Activated B cell treated with CpG ODN at 0.5 μM for 24 hours (primary cell): ENCODE measurements at regions of chr11 and their contacts with region 1.

Region 1: DNA sequence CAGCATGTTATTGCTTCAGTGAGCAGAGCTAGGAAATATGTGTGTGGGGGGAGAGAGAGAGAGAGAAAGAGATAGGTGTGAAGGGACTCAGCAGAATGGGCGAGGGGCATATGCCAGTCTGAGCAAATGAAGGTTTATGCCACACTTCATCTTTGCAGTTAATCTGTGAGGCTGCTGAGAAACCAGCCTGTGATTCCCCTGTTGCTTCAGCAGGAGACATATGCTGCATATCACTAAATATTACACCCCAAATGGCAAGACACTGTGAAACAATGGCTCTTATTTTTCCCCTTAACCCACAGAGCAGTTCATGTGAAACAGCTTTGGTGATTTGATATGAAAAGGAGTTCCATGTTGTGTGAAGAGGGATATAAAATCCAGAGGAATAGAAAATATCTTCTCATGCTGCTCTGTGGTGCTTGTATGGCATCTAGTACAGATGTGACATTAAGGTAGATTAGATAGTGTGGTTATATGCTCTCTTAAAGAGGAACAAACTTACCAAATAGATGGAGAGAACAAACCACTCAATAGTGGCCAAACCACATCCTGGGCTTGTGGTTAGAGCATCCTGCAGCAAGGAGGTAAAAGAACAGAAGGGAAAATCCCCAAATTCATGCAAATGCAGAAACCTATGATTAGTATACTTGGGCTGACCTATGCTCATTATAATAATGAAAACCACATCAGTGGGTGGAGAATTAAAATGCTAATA is 864.2 kb downstream of the FAM181B start:
- DNase-seq: peak; percentile 38
- ATAC-seq: peak; percentile 86
- H3K4me3 Mint-ChIP-seq: peak overlapping the region; percentile 73
- H3K27ac Mint-ChIP-seq: peak overlapping the region; percentile 83
- H3K4me1 Mint-ChIP-seq: peaks cover 39% of the 10 kb centered on the region
- H3K27me3 Mint-ChIP-seq: peaks cover 1% of the 10 kb centered on the region
- CTCF ChIP-seq: no peak

Region 2: DNA sequence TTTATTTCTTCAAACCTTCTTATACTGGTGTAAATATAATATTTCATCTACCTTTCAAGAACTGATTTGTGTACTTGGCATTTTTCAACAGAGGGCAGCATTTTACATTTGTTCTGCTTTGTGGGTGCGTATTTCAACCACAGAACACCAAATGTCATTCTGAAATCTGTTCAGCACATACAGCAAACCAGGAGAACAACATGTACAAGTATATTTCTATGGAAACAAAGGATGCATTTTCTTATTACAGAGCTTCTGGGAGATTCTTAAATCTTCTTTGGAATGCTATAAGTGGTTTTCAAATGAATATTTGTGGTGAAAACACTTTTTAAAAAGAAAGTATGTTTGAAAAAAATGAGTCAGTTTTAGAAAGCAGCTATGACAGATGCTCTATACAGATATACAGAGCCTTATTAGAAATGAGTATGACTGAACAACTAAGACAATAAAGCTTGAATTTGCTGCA is 81.9 kb before region 1 on chr11:
- CTCF ChIA-PET with region 1: no interaction called
- POLR2A ChIA-PET with region 1: no interaction called
- intact Hi-C with region 1: loop called (anchors 1 kb)
- DNase-seq: no peak
- ATAC-seq: no peak
- H3K4me3 Mint-ChIP-seq: no peak overlapping the region
- H3K27ac Mint-ChIP-seq: no peak overlapping the region
- H3K4me1 Mint-ChIP-seq: no peaks in the 10 kb centered on the region
- H3K27me3 Mint-ChIP-seq: no peaks in the 10 kb centered on the region
- CTCF ChIP-seq: peak; percentile 19

Region 3: DNA sequence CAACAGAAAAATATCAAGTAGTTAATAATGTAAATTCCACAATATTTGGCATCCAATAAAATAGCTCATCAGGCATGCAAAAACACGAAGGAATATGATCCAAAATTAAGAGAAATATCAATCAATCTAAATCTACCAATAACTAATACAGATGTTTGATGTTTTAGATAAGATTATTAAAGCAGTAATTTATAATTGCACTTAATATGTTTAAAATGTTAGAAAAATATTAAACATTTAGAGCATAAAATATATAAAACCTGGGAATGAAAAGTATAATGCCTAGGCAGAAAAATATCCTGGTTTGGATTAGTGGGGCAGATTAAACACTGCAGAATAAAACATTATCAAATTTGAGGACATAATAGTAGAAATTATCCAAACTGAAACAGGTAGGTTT is 15.7 kb before region 1 on chr11:
- CTCF ChIA-PET with region 1: interaction called, 4 read pairs
- POLR2A ChIA-PET with region 1: no interaction called
- intact Hi-C with region 1: loop called (anchors 2 kb)
- DNase-seq: no peak
- ATAC-seq: no peak
- H3K4me3 Mint-ChIP-seq: no peak overlapping the region
- H3K27ac Mint-ChIP-seq: no peak overlapping the region
- H3K4me1 Mint-ChIP-seq: no peaks in the 10 kb centered on the region
- H3K27me3 Mint-ChIP-seq: peaks cover 3% of the 10 kb centered on the region
- CTCF ChIP-seq: no peak

Region 4: GRCh38 chr11:81963018-81963417 is 93.5 kb after region 1 on chr11:
- CTCF ChIA-PET with region 1: no interaction called
- POLR2A ChIA-PET with region 1: no interaction called
- intact Hi-C with region 1: no loop called
- DNase-seq: no peak
- ATAC-seq: no peak
- H3K4me3 Mint-ChIP-seq: no peak overlapping the region
- H3K27ac Mint-ChIP-seq: no peak overlapping the region
- H3K4me1 Mint-ChIP-seq: peaks cover 2% of the 10 kb centered on the region
- H3K27me3 Mint-ChIP-seq: no peaks in the 10 kb centered on the region
- CTCF ChIP-seq: no peak

Region 5: DNA sequence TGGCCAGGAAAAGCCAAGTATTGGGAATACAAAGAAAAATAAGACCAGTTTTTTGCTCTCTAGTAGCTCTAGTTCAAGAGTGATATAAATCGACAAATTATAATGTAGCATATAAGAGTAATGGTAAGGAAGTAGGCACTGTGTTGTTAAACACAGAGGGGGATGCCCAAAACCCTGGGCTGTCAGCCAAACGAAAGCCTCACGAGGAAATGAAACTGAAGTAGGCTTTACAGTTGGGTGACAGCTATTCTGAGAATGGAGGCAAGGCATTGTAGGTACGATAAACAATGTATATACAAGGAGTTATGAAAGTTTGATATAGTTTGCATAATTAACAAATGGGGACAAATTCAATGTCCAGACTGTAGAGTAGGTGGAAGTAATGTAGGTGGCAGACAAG is 687.8 kb after region 1 on chr11:
- CTCF ChIA-PET with region 1: no interaction called
- POLR2A ChIA-PET with region 1: no interaction called
- intact Hi-C with region 1: loop called (anchors 2 kb)
- DNase-seq: no peak
- ATAC-seq: peak; percentile 95
- H3K4me3 Mint-ChIP-seq: peak overlapping the region; percentile 5
- H3K27ac Mint-ChIP-seq: no peak overlapping the region
- H3K4me1 Mint-ChIP-seq: peaks cover 45% of the 10 kb centered on the region
- H3K27me3 Mint-ChIP-seq: no peaks in the 10 kb centered on the region
- CTCF ChIP-seq: no peak